Ovary (tissue), 10 donors: ENCODE measurements at regions of chr12 and their contacts with region 1.

Region 1: GRCh38 chr12:98939350-98939749 is 294.3 kb downstream of the APAF1 start:
- DNase-seq: peak in 1 of 5 donors; percentile 38
- H3K4me3 ChIP-seq: no peak overlapping the region
- H3K27ac ChIP-seq: no peak overlapping the region
- H3K4me1 ChIP-seq: no peaks in the 10 kb centered on the region
- H3K27me3 ChIP-seq: no peaks in the 10 kb centered on the region
- CTCF ChIP-seq: no peak
- EP300 ChIP-seq: no peak
- POLR2A ChIP-seq: no peak

Region 2: DNA sequence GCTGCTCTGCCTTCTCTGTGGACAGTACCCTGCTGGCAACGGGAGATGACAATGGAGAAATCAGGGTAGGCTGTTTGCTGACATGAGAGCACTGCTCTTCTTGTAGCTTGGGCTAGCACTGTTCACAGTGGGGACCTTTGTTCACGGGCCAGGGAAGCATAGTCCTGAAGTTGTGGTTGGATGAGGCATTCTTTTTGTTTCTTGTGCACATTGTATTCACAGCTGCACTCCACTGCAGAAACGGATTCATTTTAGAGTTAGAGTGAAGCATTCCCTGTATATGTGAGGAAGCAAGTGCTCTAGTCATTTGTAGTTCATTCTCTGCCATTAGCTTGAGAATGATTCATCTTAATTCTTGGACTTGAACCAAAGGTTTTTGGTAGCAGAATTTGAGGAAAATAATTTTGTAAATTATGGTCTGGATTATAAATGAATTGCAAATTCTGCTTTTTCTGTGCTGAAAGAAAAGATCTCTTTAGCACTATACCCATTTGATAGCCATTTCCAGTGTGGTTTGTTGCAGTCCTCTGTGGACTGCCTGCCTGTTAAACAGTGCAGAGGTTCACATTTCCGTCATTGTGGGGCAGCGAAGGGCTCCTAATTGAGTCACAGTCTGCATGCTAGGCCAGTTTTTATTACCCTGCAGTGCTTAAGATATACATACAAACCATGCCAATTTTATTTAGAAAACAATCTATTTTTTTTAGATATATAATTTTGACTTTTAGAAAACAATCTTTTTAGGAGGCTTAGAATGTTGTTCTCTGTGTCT is 213.7 kb before region 1 on chr12:
- intact Hi-C with region 1: loop called in 1 of 4 experiments (anchors 10 kb)
- DNase-seq: peak; percentile 28 to 71 (median 51)
- H3K4me3 ChIP-seq: no peak overlapping the region
- H3K27ac ChIP-seq: no peak overlapping the region
- H3K4me1 ChIP-seq: no peaks in the 10 kb centered on the region
- H3K27me3 ChIP-seq: no peaks in the 10 kb centered on the region
- CTCF ChIP-seq: no peak
- EP300 ChIP-seq: no peak
- POLR2A ChIP-seq: no peak

Region 3: GRCh38 chr12:98771811-98772752 is 167.3 kb before region 1 on chr12:
- intact Hi-C with region 1: no loop called
- DNase-seq: no peak
- H3K4me3 ChIP-seq: no peak overlapping the region
- H3K27ac ChIP-seq: no peak overlapping the region
- H3K4me1 ChIP-seq: no peaks in the 10 kb centered on the region
- H3K27me3 ChIP-seq: no peaks in the 10 kb centered on the region
- CTCF ChIP-seq: no peak
- EP300 ChIP-seq: no peak
- POLR2A ChIP-seq: no peak

Region 4: DNA sequence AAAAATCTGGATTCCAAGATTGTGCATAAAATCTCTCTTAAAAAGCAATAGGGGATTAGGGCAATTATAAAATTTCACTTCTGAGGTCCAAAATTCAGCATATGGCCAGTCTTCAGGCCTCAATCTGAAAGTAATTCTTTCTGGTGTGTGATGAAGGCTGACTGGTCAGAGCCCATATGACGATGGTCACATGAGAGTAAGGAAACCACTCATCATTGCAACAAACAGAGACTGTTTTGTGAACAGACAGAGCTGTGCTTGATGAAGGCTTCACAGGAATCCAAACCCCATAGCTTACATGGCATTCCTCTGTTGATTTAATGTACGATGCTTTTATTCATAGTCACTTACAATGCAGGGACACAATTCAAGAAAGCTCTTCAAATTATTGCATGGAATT is 56.1 kb before region 1 on chr12:
- intact Hi-C with region 1: no loop called
- DNase-seq: no peak
- H3K4me3 ChIP-seq: no peak overlapping the region
- H3K27ac ChIP-seq: no peak overlapping the region
- H3K4me1 ChIP-seq: no peaks in the 10 kb centered on the region
- H3K27me3 ChIP-seq: no peaks in the 10 kb centered on the region
- CTCF ChIP-seq: no peak
- EP300 ChIP-seq: no peak
- POLR2A ChIP-seq: no peak